ENCODE measurements at regions of chr1 and their contacts with region 1.

Region 1: DNA sequence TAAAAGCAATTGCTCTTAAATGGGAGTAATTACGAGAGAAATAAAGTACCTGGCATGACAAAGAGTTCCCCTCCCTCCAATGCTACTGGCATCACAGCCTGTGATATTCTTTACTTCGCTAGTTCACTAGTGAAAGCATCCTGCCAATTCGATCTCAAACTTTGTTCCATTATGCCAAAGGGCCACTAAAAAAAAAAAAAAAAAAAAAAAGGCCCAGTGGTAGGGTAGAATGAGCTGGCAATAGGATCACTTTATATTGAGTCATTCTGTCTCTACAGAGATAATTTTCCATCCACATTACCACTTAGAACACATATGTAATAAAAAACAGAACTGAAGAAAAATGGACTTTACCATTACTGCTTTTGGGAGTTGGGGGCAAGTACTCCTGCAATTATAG is 11.2 kb downstream of the PUM1 start:
- DNase-seq: no peak
- ATAC-seq: no peak

Region 2: DNA sequence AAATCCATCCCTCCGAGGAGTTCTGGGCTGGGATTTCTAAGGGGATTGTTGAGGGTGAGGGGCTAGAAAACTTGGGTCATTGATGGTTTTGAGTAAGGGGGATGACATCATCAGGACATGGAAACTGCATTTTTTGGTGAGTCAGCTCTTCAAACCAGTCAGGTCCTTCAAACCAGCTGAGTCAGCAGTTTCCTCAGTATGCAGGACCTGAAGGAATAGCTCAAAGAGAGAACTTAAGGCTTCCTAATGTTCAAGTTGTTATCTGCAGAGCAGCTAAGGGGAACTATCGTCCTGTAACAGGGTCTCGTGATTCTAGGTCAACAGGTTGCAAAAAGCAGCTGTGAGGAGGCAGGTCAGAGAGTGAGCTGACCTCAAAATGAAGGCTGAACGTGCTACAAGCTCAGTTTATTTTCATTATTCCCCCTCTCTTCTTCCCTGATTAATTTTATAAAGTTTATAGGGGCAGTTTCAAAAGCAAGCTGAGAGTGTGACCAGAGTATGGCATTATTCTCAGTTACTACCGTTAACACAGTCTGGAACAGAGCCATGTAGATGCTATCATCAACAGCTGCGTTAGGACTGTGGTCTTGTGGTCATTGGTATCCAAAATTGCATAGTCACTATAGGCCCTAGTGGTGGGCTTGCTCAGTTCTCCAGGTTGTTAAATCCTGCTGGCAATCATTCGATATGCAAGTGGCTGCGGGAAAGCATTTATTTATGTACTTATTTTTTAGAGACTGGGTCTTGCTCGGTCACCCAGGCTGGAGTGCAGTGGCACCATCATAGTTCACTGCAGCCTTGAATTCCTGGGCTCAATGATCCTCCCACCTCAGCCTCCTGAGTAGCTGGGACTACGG is 135.1 kb before region 1 on chr1:
- intact Hi-C with region 1: no loop called
- DNase-seq: no peak
- ATAC-seq: peak; percentile 39

Region 3: DNA sequence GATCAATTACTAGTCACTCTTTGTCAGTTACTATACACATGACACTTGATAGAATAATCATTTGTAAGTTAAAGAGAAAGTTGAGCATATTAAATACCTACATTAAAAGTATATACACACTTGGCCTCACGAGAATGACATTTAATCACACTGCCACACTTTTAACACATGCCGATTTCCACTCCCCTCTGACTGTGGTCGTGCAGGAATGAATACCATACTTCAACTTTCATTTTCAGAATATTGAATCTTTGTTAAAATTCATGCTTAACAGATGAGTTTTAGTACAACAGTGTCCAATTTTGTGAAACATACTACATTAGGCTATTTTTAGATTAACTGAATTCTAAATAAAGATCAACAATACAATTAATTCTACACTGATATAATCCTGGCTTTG is 67.6 kb before region 1 on chr1:
- intact Hi-C with region 1: loop called (anchors 5 kb)
- DNase-seq: no peak
- ATAC-seq: no peak